Heart left ventricle (tissue), 16 donors: ENCODE measurements at regions of chr19 and their contacts with region 1.

Region 1: DNA sequence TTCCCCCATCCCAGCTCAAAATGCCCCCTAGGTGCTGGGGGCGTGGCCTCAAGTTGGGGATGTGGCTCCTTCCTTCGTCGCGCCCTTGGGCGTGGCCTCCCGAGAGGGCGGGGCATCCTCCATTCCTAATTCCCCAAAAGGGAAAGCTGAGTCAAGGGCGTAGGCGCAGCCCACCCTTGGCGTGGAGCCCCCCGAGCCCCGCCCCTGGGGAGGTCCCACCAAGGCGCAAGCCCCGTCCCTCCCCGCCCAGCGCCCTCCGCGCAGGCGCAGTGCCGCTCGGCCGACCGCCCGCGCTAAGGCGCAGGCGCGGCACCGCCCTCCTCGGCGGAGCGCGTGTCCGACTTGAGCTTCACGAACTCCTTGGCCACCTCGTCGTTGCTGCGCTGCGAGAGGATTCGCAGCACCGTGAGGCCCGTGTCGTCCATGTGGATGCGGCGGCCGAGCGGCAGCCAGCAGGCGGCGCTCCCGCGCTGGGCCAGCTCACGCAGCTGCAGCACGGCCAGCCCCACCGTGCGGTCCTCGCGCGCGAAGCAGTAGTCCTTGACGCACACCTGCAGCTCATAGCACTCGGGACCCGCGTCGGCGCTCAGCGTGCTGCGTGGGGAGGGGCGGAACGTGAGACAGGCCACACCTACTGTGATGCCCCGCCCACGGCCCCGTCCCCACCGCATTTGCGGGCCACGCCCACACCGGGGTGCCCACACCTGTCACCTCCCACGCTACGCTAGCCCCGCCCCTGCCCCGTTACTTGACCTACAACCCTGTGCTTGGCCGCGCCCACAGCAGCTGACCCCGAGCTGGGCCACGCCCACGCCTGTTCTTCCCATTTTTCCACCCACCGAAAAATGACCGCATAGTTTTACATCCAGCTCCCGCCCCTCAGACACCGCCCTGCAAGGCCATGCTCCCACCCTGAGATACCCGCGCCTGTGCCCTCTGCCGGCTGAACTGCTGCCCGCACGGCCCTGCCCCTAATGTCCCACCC is 50.6 kb downstream of the COLGALT1 start:
- DNase-seq: peak; percentile 48 to 87 (median 73)
- ATAC-seq: peak in 3 of 4 donors; percentile 71 to 86 (median 82)
- H3K4me3 ChIP-seq: peak overlapping the region; percentile 7 to 53 (median 43)
- H3K27ac ChIP-seq: peak overlapping the region in 2 of 12 donors; percentile 5 to 9
- H3K4me1 ChIP-seq: peaks cover 0 to 14% (median 7%) of the 10 kb centered on the region in 12 donors
- H3K27me3 ChIP-seq: peaks cover 0 to 37% (median 7%) of the 10 kb centered on the region in 9 donors
- CTCF ChIP-seq: peak; percentile 41 to 71 (median 54)
- POLR2A ChIP-seq: no peak

Region 2: DNA sequence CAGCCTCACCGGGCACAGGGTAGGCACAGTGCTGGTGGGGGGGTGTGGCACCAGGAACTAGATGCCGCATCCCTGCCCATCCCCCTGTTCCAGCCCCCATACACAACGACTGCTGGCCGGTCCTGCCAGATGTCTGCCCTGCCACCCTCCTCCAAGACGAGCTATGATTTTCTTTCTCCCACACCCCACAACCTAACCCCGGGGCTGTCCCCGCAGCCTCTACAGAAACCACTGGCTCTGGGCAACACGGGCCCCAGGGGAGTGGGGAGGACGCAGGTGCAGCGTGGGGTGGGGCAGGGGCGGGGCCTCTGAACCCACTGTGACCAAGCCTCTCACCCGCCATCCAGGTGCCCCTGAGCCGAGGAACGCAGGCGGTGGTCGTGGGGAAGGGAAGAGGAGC is 79.1 kb before region 1 on chr19:
- intact Hi-C with region 1: no loop called
- DNase-seq: no peak
- ATAC-seq: no peak
- H3K4me3 ChIP-seq: no peak overlapping the region
- H3K27ac ChIP-seq: no peak overlapping the region
- H3K4me1 ChIP-seq: peaks cover 0 to 28% (median 3%) of the 10 kb centered on the region in 12 donors
- H3K27me3 ChIP-seq: peaks cover 0 to 35% (median 0%) of the 10 kb centered on the region in 9 donors
- CTCF ChIP-seq: no peak
- POLR2A ChIP-seq: no peak

Region 3: GRCh38 chr19:17766543-17767131 is 160.6 kb after region 1 on chr19:
- intact Hi-C with region 1: loop called in 5 of 10 experiments (anchors 5 to 10 kb)
- DNase-seq: peak; percentile 71 to 91 (median 80)
- ATAC-seq: peak; percentile 32 to 92 (median 85)
- H3K4me3 ChIP-seq: peak overlapping the region in 5 of 12 donors; percentile 7 to 30 (median 25)
- H3K27ac ChIP-seq: no peak overlapping the region
- H3K4me1 ChIP-seq: peaks cover 0 to 13% (median 6%) of the 10 kb centered on the region in 12 donors
- H3K27me3 ChIP-seq: no peaks in the 10 kb centered on the region
- CTCF ChIP-seq: peak; percentile 77 to 90 (median 79)
- POLR2A ChIP-seq: no peak

Region 4: DNA sequence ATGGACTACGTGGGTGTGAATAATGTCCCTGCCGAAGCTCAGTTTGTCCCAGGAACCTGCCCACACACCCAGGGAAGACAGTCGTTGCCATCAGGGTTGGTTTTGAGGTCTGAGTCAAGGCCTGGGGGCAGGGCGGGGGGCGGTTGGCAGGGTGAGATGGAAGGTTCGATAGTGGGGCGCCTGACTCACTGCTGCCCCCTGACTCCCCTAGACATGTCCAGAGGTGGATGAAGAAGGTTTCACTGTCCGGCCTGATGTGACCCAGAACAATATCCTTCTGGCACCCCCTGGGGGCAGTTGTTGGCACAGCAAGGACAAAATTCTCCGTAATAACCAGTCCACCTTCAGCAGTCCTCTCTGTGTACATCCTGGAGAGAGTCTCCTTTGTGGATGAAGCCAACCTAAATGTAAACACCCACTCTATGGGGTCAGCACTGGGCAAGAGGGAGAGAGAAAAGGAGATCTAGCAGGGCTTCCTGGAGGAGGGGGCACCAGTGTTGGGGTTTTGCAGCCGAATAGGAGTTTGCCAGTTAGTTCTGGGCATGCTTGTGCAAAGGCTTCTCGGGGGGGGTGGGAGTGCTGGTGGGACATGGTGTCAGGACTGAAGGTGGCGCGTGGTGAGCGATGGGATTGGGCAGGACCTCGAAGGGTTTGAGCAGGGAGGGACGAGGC is 169.3 kb after region 1 on chr19:
- intact Hi-C with region 1: loop called in 3 of 10 experiments (anchors 10 kb)
- DNase-seq: no peak
- ATAC-seq: no peak
- H3K4me3 ChIP-seq: no peak overlapping the region
- H3K27ac ChIP-seq: no peak overlapping the region
- H3K4me1 ChIP-seq: peaks cover 0 to 9% (median 0%) of the 10 kb centered on the region in 12 donors
- H3K27me3 ChIP-seq: peaks cover 0 to 56% (median 21%) of the 10 kb centered on the region in 9 donors
- CTCF ChIP-seq: peak in 7 of 12 donors; percentile 17 to 49 (median 43)
- POLR2A ChIP-seq: no peak

Region 5: GRCh38 chr19:17784201-17785008 is 178.4 kb after region 1 on chr19:
- intact Hi-C with region 1: loop called in 3 of 10 experiments (anchors 10 kb)
- DNase-seq: peak; percentile 39 to 73 (median 58)
- ATAC-seq: peak in 3 of 4 donors; percentile 34 to 70 (median 67)
- H3K4me3 ChIP-seq: no peak overlapping the region
- H3K27ac ChIP-seq: no peak overlapping the region
- H3K4me1 ChIP-seq: peaks cover 0 to 5% (median 0%) of the 10 kb centered on the region in 12 donors
- H3K27me3 ChIP-seq: peaks cover 0 to 32% (median 13%) of the 10 kb centered on the region in 9 donors
- CTCF ChIP-seq: peak; percentile 65 to 82 (median 76)
- POLR2A ChIP-seq: no peak